Naive thymus-derived CD4-positive, alpha-beta T cell (primary cell): ENCODE measurements at regions of chr6 and their contacts with region 1.

Region 1: DNA sequence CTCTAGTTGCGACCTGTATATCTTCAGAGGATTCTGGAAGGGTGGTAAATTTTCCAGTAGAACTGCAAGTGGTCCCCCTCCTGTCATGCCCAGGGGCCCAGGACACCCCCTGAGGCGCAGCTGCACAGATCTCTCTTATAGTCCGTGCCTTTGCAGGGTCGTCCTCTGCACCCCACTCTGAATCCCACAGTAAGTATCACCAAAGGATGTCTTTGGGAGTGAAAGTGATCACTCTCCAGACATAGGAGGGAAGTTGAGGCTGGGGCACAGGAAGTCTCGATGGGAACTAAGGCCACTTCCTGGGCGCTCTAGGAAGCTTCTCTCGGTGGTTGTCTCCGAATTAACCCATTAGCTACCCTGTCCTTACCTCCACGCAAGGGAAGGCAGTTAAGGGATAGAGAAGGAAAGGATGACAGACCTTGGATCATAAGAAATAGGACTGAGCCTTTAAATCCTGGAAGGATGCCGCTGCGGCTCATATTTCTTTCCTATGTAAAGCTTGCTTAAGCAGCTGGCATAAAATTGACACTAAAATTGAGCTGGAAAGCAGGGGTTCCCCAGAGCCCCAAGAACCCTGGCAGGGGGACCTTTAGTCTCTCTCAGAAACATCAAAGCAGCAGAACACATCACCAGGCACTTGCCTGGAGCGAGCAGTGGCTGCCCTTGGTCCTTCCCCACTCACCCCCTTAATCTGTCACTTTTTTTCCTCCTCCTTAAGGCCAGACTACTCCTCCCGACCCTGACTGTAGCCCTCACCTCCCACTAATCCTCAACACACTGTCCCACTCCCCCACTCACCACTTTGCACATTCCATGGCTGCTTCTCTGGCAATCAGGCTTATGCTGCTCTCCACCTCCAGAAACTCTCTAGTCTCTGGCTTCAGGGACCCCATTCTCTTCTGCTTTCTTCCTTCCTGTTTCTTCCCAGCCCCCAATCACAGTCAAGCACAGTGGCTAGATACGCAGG is at the start of gene ZKSCAN4:
- DNase-seq: peak; percentile 44 to 86 (median 78)
- ATAC-seq: peak; percentile 96
- H3K4me3 ChIP-seq: peak within 1 kb of the TSS; percentile 100
- H3K4me3 Mint-ChIP-seq: peak within 1 kb of the TSS; percentile 84 to 100 (median 98)
- H3K27ac ChIP-seq: peak within 1 kb of the TSS; percentile 55
- H3K27ac Mint-ChIP-seq: peak within 1 kb of the TSS; percentile 85 to 98 (median 92)
- H3K4me1 ChIP-seq: peaks cover 14 to 18% of the 10 kb centered on the region in 2 donors
- H3K4me1 Mint-ChIP-seq: peaks cover 21 to 53% (median 39%) of the 10 kb centered on the region in 7 donors
- H3K27me3 ChIP-seq: no peaks in the 10 kb centered on the region
- H3K27me3 Mint-ChIP-seq: peaks cover 0 to 4% (median 0%) of the 10 kb centered on the region in 5 donors
- total RNA-seq, gene ZKSCAN4: 2.8 to 11.8 (median 8.7) TPM

Region 2: DNA sequence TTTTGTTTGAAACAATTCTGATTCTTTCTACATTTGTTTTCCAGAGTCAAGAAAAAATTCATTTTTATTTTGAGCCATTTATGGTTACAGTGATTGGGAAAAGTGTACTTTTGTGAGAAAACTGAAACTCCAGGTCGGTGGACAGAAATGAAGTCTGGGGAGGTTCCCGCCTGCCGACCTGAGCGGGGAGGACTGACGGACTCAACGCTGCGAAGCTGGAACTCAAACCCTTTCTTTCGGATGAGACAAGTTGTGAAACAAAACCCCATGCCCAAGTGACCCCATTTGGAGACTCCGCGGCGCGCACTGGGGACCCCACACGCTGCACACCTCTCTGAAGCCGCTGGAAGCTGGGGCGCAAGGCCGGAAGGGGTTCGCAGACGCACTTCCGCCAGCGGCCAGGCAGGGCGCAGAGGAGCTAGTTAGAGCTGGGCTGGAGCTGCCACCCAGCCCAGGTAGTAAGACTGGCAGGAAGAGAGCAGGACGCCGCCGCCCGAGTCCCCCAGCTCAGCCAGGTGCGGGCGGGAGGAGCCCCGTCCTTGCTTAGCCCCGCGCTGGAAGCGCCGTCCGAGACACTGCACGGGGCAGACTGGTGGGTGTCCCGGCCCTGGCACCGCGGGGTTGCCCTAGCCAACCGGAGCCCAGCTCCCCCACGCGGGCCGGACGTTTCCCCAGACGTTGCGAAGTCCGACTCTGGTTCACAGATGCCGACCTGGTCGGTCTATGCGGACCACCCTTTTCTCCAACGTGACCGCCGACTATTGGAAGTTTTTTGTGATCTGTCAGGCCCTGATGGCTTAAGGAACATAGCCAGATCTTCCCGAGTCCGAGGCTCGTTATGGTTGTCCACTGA is 147.7 kb before region 1 on chr6:
- CTCF ChIA-PET with region 1: no interaction called
- POLR2A ChIA-PET with region 1: interaction called, 3 read pairs
- intact Hi-C with region 1: loop called in 1 of 2 experiments (anchors 1 kb)
- DNase-seq: peak; percentile 68 to 82 (median 79)
- ATAC-seq: peak; percentile 99
- H3K4me3 ChIP-seq: peak overlapping the region; percentile 79
- H3K4me3 Mint-ChIP-seq: peak overlapping the region; percentile 86 to 95 (median 92)
- H3K27ac ChIP-seq: peak overlapping the region; percentile 76
- H3K27ac Mint-ChIP-seq: peak overlapping the region; percentile 76 to 96 (median 94)
- H3K4me1 ChIP-seq: peaks cover 0 to 7% of the 10 kb centered on the region in 2 donors
- H3K4me1 Mint-ChIP-seq: peaks cover 6 to 19% (median 9%) of the 10 kb centered on the region in 7 donors
- H3K27me3 ChIP-seq: no peaks in the 10 kb centered on the region
- H3K27me3 Mint-ChIP-seq: peaks cover 0 to 26% (median 16%) of the 10 kb centered on the region in 5 donors

Region 3: GRCh38 chr6:28118217-28118616 is 134.1 kb before region 1 on chr6:
- CTCF ChIA-PET with region 1: no interaction called
- POLR2A ChIA-PET with region 1: no interaction called
- intact Hi-C with region 1: no loop called
- DNase-seq: no peak
- ATAC-seq: no peak
- H3K4me3 ChIP-seq: no peak overlapping the region
- H3K4me3 Mint-ChIP-seq: no peak overlapping the region
- H3K27ac ChIP-seq: no peak overlapping the region
- H3K27ac Mint-ChIP-seq: no peak overlapping the region
- H3K4me1 ChIP-seq: no peaks in the 10 kb centered on the region
- H3K4me1 Mint-ChIP-seq: peaks cover under 1 to 9% (median 2%) of the 10 kb centered on the region in 7 donors
- H3K27me3 ChIP-seq: no peaks in the 10 kb centered on the region
- H3K27me3 Mint-ChIP-seq: no peaks in the 10 kb centered on the region

Region 4: DNA sequence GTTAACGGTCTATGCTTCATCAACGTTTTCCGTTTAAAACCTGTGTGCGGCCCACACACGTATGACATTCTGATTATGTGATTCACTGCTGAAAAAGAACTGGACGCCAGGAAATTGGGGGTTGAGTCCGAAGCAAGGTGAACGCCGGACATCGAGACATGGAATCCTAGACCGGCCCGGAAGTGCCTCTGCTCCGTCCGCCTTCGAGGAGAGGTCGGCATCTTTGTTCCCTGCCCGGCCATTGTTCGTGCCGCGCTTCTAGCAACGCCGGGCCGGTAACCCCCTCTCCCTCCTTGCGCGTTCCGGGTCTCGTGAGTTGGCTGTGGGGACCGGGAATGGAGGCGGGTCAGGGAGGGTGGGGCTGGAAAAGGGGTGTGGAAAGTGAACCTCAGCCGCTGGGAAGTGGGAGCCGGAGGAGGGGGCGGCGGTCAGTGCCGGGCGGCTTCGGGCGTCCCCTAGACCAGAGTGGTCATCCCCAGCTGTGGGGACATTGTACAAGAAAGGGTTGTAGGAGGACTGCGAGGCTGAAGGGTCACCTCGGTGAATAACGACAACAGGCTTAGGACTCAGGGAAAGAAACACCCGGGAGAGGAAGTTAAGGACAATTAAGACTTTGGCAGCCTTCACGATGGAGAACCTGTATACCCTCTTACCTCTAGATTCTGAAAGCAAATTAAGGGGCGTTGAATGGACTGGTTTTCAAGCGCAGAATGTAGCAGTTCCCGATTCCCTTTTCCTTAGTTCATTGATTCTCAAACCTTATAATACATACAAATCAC is 27.0 kb before region 1 on chr6 and contains the start of gene ZSCAN9:
- CTCF ChIA-PET with region 1: no interaction called
- POLR2A ChIA-PET with region 1: no interaction called
- intact Hi-C with region 1: loop called in 1 of 2 experiments (anchors 2 kb)
- DNase-seq: peak in 3 of 9 donors; percentile 20 to 46 (median 25)
- ATAC-seq: peak; percentile 86
- H3K4me3 ChIP-seq: peak within 1 kb of the TSS; percentile 55
- H3K4me3 Mint-ChIP-seq: peak within 1 kb of the TSS; percentile 74 to 94 (median 88)
- H3K27ac ChIP-seq: no peak within 1 kb of the TSS
- H3K27ac Mint-ChIP-seq: peak within 1 kb of the TSS in 2 of 9 donors; percentile 5 to 62
- H3K4me1 ChIP-seq: no peaks in the 10 kb centered on the region
- H3K4me1 Mint-ChIP-seq: peaks cover 0 to 36% (median 13%) of the 10 kb centered on the region in 7 donors
- H3K27me3 ChIP-seq: peaks cover 7 to 8% of the 10 kb centered on the region in 2 donors
- H3K27me3 Mint-ChIP-seq: peaks cover 37 to 65% (median 55%) of the 10 kb centered on the region in 5 donors
- total RNA-seq, gene ZSCAN9: 0.59 to 5.2 (median 0.84) TPM

Region 5: DNA sequence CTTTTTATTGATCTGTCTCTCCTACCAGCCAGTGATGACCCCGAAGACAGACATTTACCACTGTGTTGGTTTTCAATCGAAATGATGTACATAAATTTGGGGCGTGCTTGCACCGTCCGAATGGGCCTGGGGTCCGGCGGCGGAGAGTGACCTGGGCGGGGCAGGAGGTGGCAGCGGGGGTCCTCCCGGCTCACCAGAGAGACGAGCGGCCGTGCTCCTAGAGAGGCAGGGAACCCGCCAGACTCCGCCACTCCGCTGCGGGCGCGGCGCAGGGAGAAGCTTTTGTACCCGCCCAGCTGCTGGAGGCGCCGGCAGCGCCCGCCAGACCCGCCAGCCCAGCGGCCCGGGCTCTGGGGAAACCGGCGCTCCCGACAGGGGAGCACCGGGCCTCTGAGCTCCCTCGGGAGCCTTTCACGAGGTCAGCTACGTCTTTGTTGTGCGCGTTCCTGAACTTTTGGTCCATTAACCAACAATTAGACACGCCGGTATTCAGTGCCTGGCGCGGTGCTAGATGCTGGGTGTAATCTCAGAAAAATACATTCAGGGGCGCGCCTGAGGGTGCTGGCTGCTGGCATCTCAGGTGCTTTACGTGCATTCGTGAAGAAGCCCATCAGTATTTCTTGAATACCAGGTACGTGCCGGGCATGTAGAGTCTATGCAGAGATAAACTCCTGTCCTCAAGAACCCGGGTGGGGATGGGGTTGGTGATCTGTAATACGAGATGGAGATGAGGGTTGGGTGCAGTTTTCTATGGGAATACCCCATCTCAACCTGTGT is 29.2 kb after region 1 on chr6 and contains the start of gene PGBD1:
- CTCF ChIA-PET with region 1: no interaction called
- POLR2A ChIA-PET with region 1: interaction called, 3 read pairs
- intact Hi-C with region 1: loop called in 1 of 2 experiments (anchors 1 kb)
- DNase-seq: peak; percentile 12 to 62 (median 26)
- ATAC-seq: peak; percentile 79
- H3K4me3 ChIP-seq: peak within 1 kb of the TSS; percentile 46
- H3K4me3 Mint-ChIP-seq: peak within 1 kb of the TSS; percentile 73 to 89 (median 77)
- H3K27ac ChIP-seq: no peak within 1 kb of the TSS
- H3K27ac Mint-ChIP-seq: peak within 1 kb of the TSS in 3 of 9 donors; percentile 30 to 74 (median 31)
- H3K4me1 ChIP-seq: peaks cover 0 to 6% of the 10 kb centered on the region in 2 donors
- H3K4me1 Mint-ChIP-seq: peaks cover 7 to 17% (median 10%) of the 10 kb centered on the region in 7 donors
- H3K27me3 ChIP-seq: peaks cover 0 to 5% of the 10 kb centered on the region in 2 donors
- H3K27me3 Mint-ChIP-seq: peaks cover 7 to 46% (median 35%) of the 10 kb centered on the region in 5 donors
- total RNA-seq, gene PGBD1: 1.1 to 1.7 (median 1.2) TPM

Region 6: DNA sequence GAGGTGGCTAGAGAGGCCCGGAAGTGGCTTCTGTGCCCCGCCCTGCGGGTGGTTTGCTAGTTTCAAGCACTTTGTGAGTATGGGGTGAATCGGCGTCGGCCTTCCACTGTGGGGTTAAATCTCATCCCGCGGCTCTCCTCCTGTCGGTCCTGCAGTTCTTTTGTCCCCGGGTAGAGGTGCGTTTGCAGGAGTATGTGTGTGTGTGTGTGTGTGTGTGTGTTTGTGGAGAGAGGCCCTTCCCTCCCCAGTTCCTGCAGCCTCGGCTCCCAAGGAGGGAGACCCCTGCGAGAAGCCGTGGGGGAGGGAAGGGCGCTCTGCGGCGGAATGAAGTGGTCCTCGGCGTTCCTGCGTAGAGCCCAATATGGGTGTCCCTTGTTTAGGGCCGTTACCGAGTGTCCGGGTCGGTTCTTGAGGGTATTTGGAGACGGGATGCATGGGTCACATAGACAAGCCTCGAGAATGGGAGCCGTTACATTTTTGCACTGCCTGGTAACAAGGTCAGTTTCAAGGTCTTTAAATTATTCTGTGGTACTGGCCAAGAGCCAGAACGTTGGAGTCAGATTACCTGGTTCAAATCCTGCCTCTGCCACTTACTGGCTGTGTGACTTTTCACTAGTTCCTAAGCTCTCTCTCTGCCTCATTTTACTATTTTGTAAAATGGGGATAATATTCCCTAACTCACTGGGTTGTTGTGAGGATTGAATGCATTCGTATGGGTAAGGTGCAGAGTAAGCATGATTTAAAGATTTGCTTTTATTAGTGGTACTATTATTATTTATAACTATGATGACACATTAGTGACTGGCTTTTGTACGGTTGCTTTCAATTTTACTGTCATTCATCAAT is 97.8 kb after region 1 on chr6 and contains the start of gene ZKSCAN3:
- CTCF ChIA-PET with region 1: interaction called, 3 read pairs
- POLR2A ChIA-PET with region 1: interaction called, 5 read pairs
- intact Hi-C with region 1: loop called in 1 of 2 experiments (anchors 1 kb)
- DNase-seq: peak; percentile 53 to 83 (median 80)
- ATAC-seq: peak; percentile 98
- H3K4me3 ChIP-seq: peak within 1 kb of the TSS; percentile 80
- H3K4me3 Mint-ChIP-seq: peak within 1 kb of the TSS; percentile 94 to 100 (median 98)
- H3K27ac ChIP-seq: peak within 1 kb of the TSS; percentile 75
- H3K27ac Mint-ChIP-seq: peak within 1 kb of the TSS; percentile 90 to 97 (median 94)
- H3K4me1 ChIP-seq: peaks cover 0 to 7% of the 10 kb centered on the region in 2 donors
- H3K4me1 Mint-ChIP-seq: peaks cover 28 to 39% (median 35%) of the 10 kb centered on the region in 7 donors
- H3K27me3 ChIP-seq: peaks cover 0 to 4% of the 10 kb centered on the region in 2 donors
- H3K27me3 Mint-ChIP-seq: peaks cover 11 to 30% (median 12%) of the 10 kb centered on the region in 5 donors
- total RNA-seq, gene ZKSCAN3: 3.3 to 13.2 (median 5.8) TPM

Region 7: GRCh38 chr6:28399350-28400121 is 147.2 kb after region 1 on chr6 and contains the start of gene ZSCAN12:
- CTCF ChIA-PET with region 1: no interaction called
- POLR2A ChIA-PET with region 1: interaction called, 3 read pairs
- intact Hi-C with region 1: loop called in 1 of 2 experiments (anchors 1 kb)
- DNase-seq: peak; percentile 73 to 87 (median 81)
- ATAC-seq: peak; percentile 97
- H3K4me3 ChIP-seq: peak within 1 kb of the TSS; percentile 88
- H3K4me3 Mint-ChIP-seq: peak within 1 kb of the TSS; percentile 84 to 96 (median 92)
- H3K27ac ChIP-seq: peak within 1 kb of the TSS; percentile 74
- H3K27ac Mint-ChIP-seq: peak within 1 kb of the TSS; percentile 77 to 96 (median 93)
- H3K4me1 ChIP-seq: peaks cover 8 to 30% of the 10 kb centered on the region in 2 donors
- H3K4me1 Mint-ChIP-seq: peaks cover 30 to 54% (median 47%) of the 10 kb centered on the region in 7 donors
- H3K27me3 ChIP-seq: no peaks in the 10 kb centered on the region
- H3K27me3 Mint-ChIP-seq: peaks cover 0 to 33% (median 22%) of the 10 kb centered on the region in 5 donors
- total RNA-seq, gene ZSCAN12: 2.9 to 10.3 (median 7.4) TPM

Region 8: GRCh38 chr6:28542440-28543296 is 290.4 kb after region 1 on chr6:
- CTCF ChIA-PET with region 1: no interaction called
- POLR2A ChIA-PET with region 1: no interaction called
- intact Hi-C with region 1: loop called in 1 of 2 experiments (anchors 2 kb)
- DNase-seq: peak; percentile 25 to 76 (median 68)
- ATAC-seq: peak; percentile 75
- H3K4me3 ChIP-seq: peak overlapping the region; percentile 62
- H3K4me3 Mint-ChIP-seq: peak overlapping the region; percentile 79 to 94 (median 88)
- H3K27ac ChIP-seq: no peak overlapping the region
- H3K27ac Mint-ChIP-seq: peak overlapping the region; percentile 26 to 92 (median 85)
- H3K4me1 ChIP-seq: peaks cover 0 to 12% of the 10 kb centered on the region in 2 donors
- H3K4me1 Mint-ChIP-seq: peaks cover 15 to 46% (median 37%) of the 10 kb centered on the region in 7 donors
- H3K27me3 ChIP-seq: peaks cover 0 to 11% of the 10 kb centered on the region in 2 donors
- H3K27me3 Mint-ChIP-seq: peaks cover 0 to 84% (median 51%) of the 10 kb centered on the region in 5 donors